Esophagus muscularis mucosa (tissue), 4 donors: ENCODE measurements at regions of chr11 and their contacts with region 1.

Region 1: DNA sequence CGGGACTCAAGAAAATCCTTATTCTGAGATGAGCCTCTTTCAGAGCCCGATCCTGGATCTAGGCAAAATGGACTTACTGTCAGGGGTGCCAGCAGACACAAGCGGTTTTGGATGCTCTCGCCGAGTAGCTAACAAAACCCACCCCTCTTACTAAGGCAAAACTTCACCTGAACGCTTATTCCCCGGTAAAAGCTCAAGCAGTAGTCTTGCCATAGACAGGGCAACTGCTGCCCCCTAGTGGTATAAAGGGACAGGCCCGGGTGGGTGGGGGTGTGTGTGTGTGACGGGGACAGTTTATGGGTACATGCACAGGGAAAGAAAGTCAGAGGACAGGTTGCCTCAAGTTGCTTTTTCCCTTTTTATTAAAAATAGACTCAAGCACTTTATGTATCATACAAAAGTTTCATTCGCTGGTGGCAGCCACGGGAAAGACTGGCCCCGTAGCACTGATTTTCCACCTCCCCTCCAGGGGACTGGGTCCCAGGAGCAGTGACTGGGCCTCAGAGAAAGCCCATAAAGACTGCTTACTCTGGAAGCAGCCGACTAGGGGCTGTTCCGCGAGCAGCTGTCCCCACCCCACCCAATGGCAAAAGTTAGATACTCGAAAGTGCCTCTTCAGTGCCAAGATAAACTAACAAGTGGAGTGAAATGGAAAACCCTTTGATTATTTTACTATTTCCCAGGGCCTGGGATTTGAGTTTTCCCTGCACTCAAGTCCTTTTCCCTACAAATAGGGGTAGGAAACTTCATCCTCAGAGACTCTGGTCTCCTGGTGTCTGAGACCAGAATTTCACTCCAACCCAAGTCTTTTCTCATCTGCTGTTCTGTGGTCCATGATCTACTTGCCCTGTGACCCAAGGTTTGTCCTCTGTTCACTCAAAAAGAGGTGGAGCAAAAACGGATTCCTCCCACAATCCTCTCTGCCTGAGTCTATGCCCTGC is 4.7 kb downstream of the YPEL4 start:
- DNase-seq: peak; percentile 97
- H3K4me3 ChIP-seq: no peak overlapping the region
- H3K27ac ChIP-seq: peak overlapping the region; percentile 32 to 64 (median 50)
- H3K4me1 ChIP-seq: peaks cover 60 to 78% (median 73%) of the 10 kb centered on the region in 4 donors
- H3K27me3 ChIP-seq: peaks cover 5 to 42% (median 33%) of the 10 kb centered on the region in 4 donors
- CTCF ChIP-seq: peak; percentile 76 to 93 (median 82)
- EP300 ChIP-seq: no peak
- POLR2A ChIP-seq: no peak

Region 2: DNA sequence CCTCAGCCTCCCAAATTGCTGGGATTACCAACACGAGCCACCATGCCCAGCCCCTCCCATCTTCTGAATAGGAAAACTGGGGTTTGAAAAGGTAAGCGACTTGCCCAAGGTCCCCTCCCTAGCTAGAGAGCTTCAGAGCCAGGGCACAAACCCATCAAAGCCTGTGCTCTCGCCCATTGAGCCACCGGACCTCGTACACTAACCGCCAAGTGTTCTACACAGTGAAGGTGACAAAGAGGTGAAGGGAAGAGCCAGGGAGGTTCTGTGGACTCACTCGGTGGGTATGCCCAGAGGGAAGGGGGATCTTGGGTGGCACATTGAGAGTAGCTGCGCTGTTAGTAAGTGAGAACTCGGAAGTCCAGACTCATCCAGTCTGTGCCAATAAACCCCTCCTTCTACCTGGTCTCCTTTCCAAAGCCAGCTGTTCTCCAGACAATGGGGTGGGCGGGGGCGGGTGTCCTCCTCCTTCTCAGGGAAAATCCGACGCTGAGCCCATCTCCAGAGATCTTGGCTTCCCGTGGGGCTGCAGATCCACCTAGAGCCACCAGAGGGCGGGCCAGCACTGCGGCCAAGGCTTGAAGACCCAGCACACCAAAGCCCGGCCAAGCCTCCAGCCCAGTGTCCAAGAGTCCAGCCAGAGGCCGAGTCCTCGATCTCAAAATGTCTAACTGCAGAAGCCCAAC is 187.9 kb before region 1 on chr11:
- intact Hi-C with region 1: loop called (anchors 10 kb)
- DNase-seq: peak; percentile 98
- H3K4me3 ChIP-seq: peak overlapping the region in 2 of 4 donors; percentile 52 to 64
- H3K27ac ChIP-seq: no peak overlapping the region
- H3K4me1 ChIP-seq: peaks cover 35 to 45% (median 45%) of the 10 kb centered on the region in 4 donors
- H3K27me3 ChIP-seq: peaks cover 0 to 63% (median 29%) of the 10 kb centered on the region in 4 donors
- CTCF ChIP-seq: peak in 2 of 3 experiments; percentile 98 to 99
- EP300 ChIP-seq: no peak
- POLR2A ChIP-seq: no peak

Region 3: GRCh38 chr11:57567515-57568329 is 77.3 kb before region 1 on chr11 and contains the start of gene UBE2L6:
- intact Hi-C with region 1: loop called (anchors 1 kb)
- DNase-seq: no peak
- H3K4me3 ChIP-seq: peak within 1 kb of the TSS; percentile 70 to 97 (median 90)
- H3K27ac ChIP-seq: peak within 1 kb of the TSS; percentile 82 to 89 (median 85)
- H3K4me1 ChIP-seq: peaks cover 17 to 45% (median 35%) of the 10 kb centered on the region in 4 donors
- H3K27me3 ChIP-seq: no peaks in the 10 kb centered on the region
- CTCF ChIP-seq: peak in 1 of 3 experiments; percentile 89
- EP300 ChIP-seq: no peak
- POLR2A ChIP-seq: no peak
- total RNA-seq, gene UBE2L6: 15.8 to 40.3 (median 32.8) TPM

Region 4: GRCh38 chr11:57604296-57605027 is 40.6 kb before region 1 on chr11:
- intact Hi-C with region 1: loop called (anchors 5 kb)
- DNase-seq: no peak
- H3K4me3 ChIP-seq: no peak overlapping the region
- H3K27ac ChIP-seq: peak overlapping the region in 1 of 4 donors; percentile 40
- H3K4me1 ChIP-seq: peaks cover 0 to 8% (median 1%) of the 10 kb centered on the region in 4 donors
- H3K27me3 ChIP-seq: no peaks in the 10 kb centered on the region
- CTCF ChIP-seq: no peak
- EP300 ChIP-seq: no peak
- POLR2A ChIP-seq: no peak

Region 5: GRCh38 chr11:57619331-57619730 is 25.7 kb before region 1 on chr11:
- intact Hi-C with region 1: no loop called
- DNase-seq: no peak
- H3K4me3 ChIP-seq: no peak overlapping the region
- H3K27ac ChIP-seq: no peak overlapping the region
- H3K4me1 ChIP-seq: no peaks in the 10 kb centered on the region
- H3K27me3 ChIP-seq: no peaks in the 10 kb centered on the region
- CTCF ChIP-seq: no peak
- EP300 ChIP-seq: no peak
- POLR2A ChIP-seq: no peak